ENCODE measurements at regions of chr1 and their contacts with region 1.

Region 1: DNA sequence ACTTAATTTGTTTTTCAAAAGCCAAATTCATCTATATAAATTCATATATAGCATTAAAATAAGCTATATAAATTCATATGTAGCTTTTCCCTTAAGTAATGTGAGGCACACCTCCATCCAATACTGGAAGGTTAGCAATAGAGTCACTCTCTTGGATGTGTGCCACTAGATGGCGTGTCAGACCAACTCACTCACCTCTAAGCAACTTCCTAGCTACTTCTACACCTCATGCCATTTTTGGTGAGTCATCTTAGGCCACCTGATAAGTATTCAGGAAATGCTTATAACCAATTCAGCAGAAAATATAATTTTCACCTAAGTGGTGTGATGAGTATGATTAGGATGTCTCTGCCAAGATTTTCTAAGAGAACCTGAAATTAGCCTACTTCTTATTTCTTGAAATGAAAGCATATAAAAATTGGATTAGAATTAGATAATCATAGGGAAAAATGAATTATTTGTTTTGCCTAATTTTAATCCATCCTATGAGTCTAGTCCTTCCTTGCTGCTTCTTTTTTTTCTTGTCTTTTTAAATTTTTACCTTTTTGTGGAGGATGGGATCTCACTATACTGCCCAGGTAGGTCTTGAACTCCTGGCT is 34.4 kb upstream of the TADA1 start:
- DNase-seq: peak; percentile 81
- H3K4me3 ChIP-seq: no peak overlapping the region
- H3K27ac ChIP-seq: no peak overlapping the region
- H3K4me1 ChIP-seq: no peaks in the 10 kb centered on the region
- H3K27me3 ChIP-seq: peaks cover 2 to 10% of the 10 kb centered on the region in 2 experiments
- CTCF ChIP-seq: peak; percentile 58 to 66
- POLR2A ChIP-seq: no peak

Region 2: GRCh38 chr1:166924823-166925541 is 14.5 kb after region 1 on chr1:
- CTCF ChIA-PET with region 1: interaction called, 20 read pairs
- POLR2A ChIA-PET with region 1: no interaction called
- dilution Hi-C with region 1: no loop called
- intact Hi-C with region 1: no loop called
- DNase-seq: no peak
- H3K4me3 ChIP-seq: no peak overlapping the region
- H3K27ac ChIP-seq: no peak overlapping the region
- H3K4me1 ChIP-seq: no peaks in the 10 kb centered on the region
- H3K27me3 ChIP-seq: peaks cover 24 to 29% of the 10 kb centered on the region in 2 experiments
- CTCF ChIP-seq: no peak
- POLR2A ChIP-seq: no peak

Region 3: DNA sequence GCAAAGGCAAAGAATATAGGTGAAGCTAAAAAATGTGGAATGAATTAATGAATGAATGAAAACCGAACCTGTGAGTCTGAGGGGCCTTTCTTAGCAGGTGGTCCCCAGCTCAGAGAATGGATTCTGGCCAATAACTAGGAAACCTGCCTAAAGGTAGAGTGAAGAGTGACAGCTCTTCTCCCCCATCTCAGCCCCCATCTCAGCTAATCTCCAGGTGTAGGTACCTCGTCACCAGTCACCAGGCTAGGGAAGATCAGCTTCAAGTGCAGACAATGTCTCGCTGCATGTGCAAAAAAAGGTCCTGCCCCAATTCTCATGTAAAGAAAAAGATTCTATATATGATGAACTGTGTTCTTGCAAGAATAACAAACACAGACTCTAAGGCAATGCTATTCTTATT is 54.0 kb after region 1 on chr1:
- CTCF ChIA-PET with region 1: no interaction called
- POLR2A ChIA-PET with region 1: no interaction called
- dilution Hi-C with region 1: no loop called
- intact Hi-C with region 1: no loop called
- DNase-seq: no peak
- H3K4me3 ChIP-seq: no peak overlapping the region
- H3K27ac ChIP-seq: no peak overlapping the region
- H3K4me1 ChIP-seq: no peaks in the 10 kb centered on the region
- H3K27me3 ChIP-seq: no peaks in the 10 kb centered on the region
- CTCF ChIP-seq: no peak
- POLR2A ChIP-seq: no peak

Region 4: GRCh38 chr1:167052389-167052788 is 141.9 kb after region 1 on chr1:
- CTCF ChIA-PET with region 1: interaction called, 509 read pairs
- POLR2A ChIA-PET with region 1: no interaction called
- dilution Hi-C with region 1: no loop called
- intact Hi-C with region 1: no loop called
- DNase-seq: no peak
- H3K4me3 ChIP-seq: no peak overlapping the region
- H3K27ac ChIP-seq: no peak overlapping the region
- H3K4me1 ChIP-seq: no peaks in the 10 kb centered on the region
- H3K27me3 ChIP-seq: no peaks in the 10 kb centered on the region
- CTCF ChIP-seq: peak; percentile 28 to 55
- POLR2A ChIP-seq: no peak

Region 5: GRCh38 chr1:167442124-167442848 is 531.8 kb after region 1 on chr1:
- CTCF ChIA-PET with region 1: interaction called, 4 read pairs
- POLR2A ChIA-PET with region 1: no interaction called
- dilution Hi-C with region 1: no loop called
- intact Hi-C with region 1: loop called (anchors 2 kb)
- DNase-seq: peak; percentile 49
- H3K4me3 ChIP-seq: no peak overlapping the region
- H3K27ac ChIP-seq: no peak overlapping the region
- H3K4me1 ChIP-seq: no peaks in the 10 kb centered on the region
- H3K27me3 ChIP-seq: peaks cover 0 to 4% of the 10 kb centered on the region in 2 experiments
- CTCF ChIP-seq: peak; percentile 81 to 88
- POLR2A ChIP-seq: no peak